ENCODE measurements at regions of chr6 and their contacts with region 1.

Region 1: GRCh38 chr6:154733012-154733625 is at the start of gene SCAF8:
- DNase-seq: peak; percentile 85 to 93 (median 88)
- ATAC-seq: peak; percentile 85
- H3K4me3 ChIP-seq: peak within 1 kb of the TSS; percentile 96
- H3K27ac ChIP-seq: peak within 1 kb of the TSS; percentile 99
- H3K4me1 ChIP-seq: peaks cover 20 to 28% of the 10 kb centered on the region in 2 experiments; a peak in 4 of 5 replicates
- H3K27me3 ChIP-seq: no peaks in the 10 kb centered on the region
- CTCF ChIP-seq: peak; percentile 71 to 91 (median 86)
- EP300 ChIP-seq: no peak
- POLR2A ChIP-seq: peak; percentile 96
- RAD21 ChIP-seq: peak; percentile 46 to 52
- polyA plus RNA-seq, gene SCAF8: 10.5 to 11.8 TPM

Region 2: GRCh38 chr6:154457881-154458284 is 275.2 kb before region 1 on chr6:
- CTCF ChIA-PET with region 1: no interaction called
- POLR2A ChIA-PET with region 1: no interaction called
- in situ Hi-C with region 1: no loop called
- intact Hi-C with region 1: no loop called
- DNase-seq: no peak
- ATAC-seq: 0 out of 3 replicates have a peak, but pooled peaks have one; percentile 13
- H3K4me3 ChIP-seq: no peak overlapping the region
- H3K27ac ChIP-seq: no peak overlapping the region
- H3K4me1 ChIP-seq: peaks cover 7% of the 10 kb centered on the region in 2 experiments; a peak in 3 of 5 replicates
- H3K27me3 ChIP-seq: no peaks in the 10 kb centered on the region
- CTCF ChIP-seq: 0 out of 6 replicates have a peak, but pooled peaks of 1 of the 3 experiments have one; percentile 2
- EP300 ChIP-seq: no peak
- POLR2A ChIP-seq: no peak
- RAD21 ChIP-seq: no peak

Region 3: DNA sequence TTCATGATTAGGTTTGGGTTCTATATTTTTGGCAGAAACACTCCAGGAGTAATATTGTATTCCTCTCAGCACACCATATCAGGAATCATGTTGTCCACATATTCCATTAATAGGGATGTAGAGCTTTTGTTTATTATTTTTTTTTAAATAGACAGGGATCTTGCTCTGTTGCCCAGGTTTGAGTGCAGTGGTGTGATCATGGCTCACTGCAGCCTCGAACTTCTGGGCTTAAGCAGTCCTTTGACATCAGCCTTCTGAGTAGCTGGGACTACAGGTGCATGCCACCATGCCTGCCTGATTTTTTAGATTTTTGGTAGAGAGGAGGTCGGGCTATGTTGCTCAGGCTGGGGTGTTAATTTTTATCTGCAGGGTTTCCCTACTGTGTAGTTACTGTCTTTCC is 12.1 kb after region 1 on chr6:
- CTCF ChIA-PET with region 1: no interaction called
- POLR2A ChIA-PET with region 1: interaction called, 14 read pairs
- in situ Hi-C with region 1: no loop called
- intact Hi-C with region 1: no loop called
- DNase-seq: no peak
- ATAC-seq: no peak; the same call in 2 of the 3 replicates
- H3K4me3 ChIP-seq: no peak overlapping the region
- H3K27ac ChIP-seq: no peak overlapping the region
- H3K4me1 ChIP-seq: no peaks in the 10 kb centered on the region
- H3K27me3 ChIP-seq: no peaks in the 10 kb centered on the region
- CTCF ChIP-seq: no peak
- EP300 ChIP-seq: no peak
- POLR2A ChIP-seq: no peak
- RAD21 ChIP-seq: no peak

Region 4: GRCh38 chr6:154805288-154805911 is 72.3 kb after region 1 on chr6:
- CTCF ChIA-PET with region 1: interaction called, 4 read pairs
- POLR2A ChIA-PET with region 1: no interaction called
- in situ Hi-C with region 1: no loop called
- intact Hi-C with region 1: loop called (anchors 2 kb)
- DNase-seq: peak; percentile 28 to 42 (median 34)
- ATAC-seq: peak; percentile 69; the same call in 2 of the 3 replicates
- H3K4me3 ChIP-seq: no peak overlapping the region
- H3K27ac ChIP-seq: no peak overlapping the region
- H3K4me1 ChIP-seq: no peaks in the 10 kb centered on the region
- H3K27me3 ChIP-seq: no peaks in the 10 kb centered on the region
- CTCF ChIP-seq: peak in 2 of 3 experiments; percentile 41 to 74; a peak in 3 of 6 replicates
- EP300 ChIP-seq: no peak
- POLR2A ChIP-seq: no peak
- RAD21 ChIP-seq: peak; percentile 61 to 63